Right ventricle myocardium inferior (tissue), 1 donor: ENCODE measurements at regions of chr12 and their contacts with region 1.

Region 1: DNA sequence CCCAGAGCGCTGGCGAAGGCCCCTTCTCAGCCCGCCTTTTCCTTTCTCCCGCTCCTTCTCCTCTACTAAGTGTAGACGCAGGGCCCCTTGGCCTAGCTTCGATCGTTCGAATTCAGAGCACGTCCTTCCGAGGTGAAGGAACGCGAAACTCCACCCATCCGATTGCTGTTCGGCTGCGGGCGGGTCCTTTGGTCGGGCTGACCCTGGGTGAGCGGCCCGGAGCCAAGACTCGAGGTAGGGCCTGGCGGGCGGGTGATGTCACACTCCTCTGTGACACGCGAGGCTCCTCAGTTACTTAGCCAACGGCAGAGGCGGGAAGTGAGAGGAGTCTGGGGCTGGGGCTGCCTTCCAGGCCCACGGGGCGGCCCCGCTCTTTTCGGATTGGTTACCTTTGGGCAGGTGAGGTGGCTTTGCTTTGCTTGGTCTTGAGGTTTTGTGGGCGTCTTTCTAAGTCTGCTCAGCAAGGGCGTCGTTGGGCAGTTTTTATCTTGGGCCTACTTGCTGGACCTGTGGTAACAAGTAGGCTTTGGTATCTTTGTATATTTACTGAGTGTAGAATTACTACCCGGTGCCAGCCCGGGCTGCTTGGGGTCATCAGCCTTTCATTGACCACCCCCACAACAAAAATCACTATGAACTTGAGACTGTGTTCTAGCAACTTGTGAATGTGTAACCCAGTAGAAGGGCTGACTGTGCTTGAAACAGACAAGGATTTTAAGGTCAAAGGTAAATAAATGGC is 694 bp downstream of the TMBIM6 start:
- DNase-seq: peak; percentile 93
- ATAC-seq: peak; percentile 74

Region 2: DNA sequence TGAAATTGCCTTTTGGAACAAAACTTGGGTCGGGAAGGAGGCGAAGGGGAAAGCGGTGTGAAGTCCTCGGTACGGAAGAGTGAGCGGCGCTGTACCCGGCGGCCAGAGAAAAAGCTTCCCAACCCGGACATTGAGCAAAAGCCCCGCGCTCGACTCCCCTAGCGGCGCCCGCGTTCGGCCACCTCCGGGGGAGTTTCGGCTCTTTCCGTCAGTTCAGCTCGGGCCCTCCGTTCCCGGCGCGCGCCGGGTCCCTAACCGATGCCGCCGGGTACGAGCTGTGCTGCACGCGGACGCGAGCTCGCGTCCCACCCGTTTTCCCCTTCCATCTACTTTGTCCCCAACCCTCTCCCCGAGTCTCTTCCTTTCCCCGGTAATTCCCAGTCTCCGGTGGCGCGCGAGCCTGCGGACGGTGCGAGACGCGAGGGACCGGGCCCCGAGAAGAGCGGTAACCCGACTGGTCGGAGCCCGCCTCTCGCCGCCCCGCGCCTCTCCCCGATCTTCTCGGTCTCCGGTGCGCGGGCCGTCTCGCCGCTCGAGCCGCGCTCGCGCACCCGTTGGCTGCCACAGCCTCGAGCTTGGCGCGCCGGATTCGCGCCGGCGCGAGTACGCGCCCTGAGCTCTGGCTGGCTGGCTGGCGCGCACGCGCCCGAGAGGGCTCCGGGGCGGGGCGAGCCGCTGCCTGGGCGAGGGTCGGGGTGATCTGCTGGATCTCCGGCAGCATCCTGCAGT is 375.2 kb before region 1 on chr12:
- intact Hi-C with region 1: no loop called
- DNase-seq: peak; percentile 92
- ATAC-seq: peak; percentile 95

Region 3: GRCh38 chr12:49527361-49528130 is 214.5 kb before region 1 on chr12:
- intact Hi-C with region 1: no loop called
- DNase-seq: no peak
- ATAC-seq: no peak

Region 4: DNA sequence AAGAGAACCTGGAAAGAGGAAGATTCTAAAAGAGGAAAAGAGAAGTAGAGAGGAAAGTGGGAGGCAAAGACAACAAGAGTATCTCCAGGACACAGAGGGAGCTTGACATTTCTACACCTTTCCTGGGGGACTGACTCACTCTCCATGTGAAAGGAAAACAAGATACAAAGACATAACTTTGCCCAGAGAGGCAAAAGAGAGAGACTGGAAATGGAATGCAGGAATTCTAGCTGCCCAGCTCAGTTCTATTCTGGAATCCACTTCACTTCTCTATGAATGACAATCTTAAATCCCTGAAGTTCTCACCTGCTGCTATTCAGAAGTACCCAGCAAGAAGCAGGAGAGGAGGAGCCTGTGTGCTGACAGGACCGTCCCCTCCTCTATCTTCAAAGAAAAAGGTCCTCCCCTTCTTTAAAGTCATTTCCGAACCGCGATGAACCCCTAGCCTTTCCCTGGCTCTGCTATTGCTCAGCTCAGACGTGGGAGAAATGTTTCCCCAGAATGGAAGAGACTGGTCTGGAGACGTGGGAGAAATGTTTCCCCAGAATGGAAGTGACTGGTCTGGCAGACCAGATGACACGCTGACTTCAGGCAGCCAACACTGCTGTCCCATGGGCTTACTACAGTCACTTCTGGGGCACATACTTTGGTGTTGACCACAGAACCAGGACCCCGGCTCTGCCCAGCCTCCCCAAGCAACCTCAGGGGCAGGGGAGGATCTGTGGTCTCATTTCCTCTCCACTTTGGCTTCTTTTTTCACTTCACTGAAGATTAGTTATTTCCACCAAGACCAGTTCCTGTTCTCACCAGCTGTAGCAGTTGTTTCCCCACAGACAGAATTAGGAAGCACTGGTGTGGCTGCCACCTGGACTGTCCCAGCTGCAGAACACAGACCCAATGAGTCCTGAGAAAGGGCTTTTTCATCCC is 43.2 kb before region 1 on chr12:
- intact Hi-C with region 1: no loop called
- DNase-seq: no peak
- ATAC-seq: peak; percentile 73

Region 5: DNA sequence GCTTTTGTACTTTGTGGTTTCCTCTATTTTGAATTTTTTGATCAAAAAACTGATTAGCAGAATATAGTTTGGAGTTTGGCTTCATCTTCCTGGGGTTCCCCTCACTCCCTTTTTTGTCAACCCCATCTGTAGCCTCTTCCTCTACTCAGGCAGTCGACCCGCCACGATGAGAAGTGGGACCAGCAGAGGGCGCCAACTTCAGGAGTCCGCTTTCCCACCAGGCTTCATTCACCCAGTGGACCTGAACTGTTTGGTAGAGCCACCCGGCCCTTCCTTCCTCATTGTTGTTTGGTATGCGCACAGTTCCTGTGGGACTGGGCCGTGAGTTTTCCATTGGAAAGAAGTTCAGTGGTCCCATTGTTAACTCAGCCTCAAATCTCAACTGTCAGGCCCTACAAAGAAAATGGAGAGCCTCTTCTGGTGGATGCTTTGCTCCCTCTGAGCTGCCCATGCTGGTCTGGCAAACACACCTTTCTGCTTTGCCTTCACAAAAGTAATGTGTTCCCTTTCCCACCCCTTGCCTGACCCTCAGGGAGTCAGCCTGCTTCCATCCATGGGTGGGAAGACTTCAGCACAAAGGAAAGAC is 21.0 kb after region 1 on chr12:
- intact Hi-C with region 1: loop called (anchors 2 kb)
- DNase-seq: peak; percentile 84
- ATAC-seq: peak; percentile 50

Region 6: GRCh38 chr12:49933796-49934195 is 191.7 kb after region 1 on chr12:
- intact Hi-C with region 1: no loop called
- DNase-seq: no peak
- ATAC-seq: no peak